HCT116 (cell line): ENCODE measurements at regions of chr2 and their contacts with region 1.

Region 1: GRCh38 chr2:241877989-241878970 is 8.8 kb downstream of the RTP5 start:
- DNase-seq: no peak
- ATAC-seq: peak; percentile 41
- H3K4me3 ChIP-seq: no peak overlapping the region
- H3K27ac ChIP-seq: no peak overlapping the region
- H3K4me1 ChIP-seq: peaks cover 10 to 23% of the 10 kb centered on the region in 2 experiments; a peak in 3 of 4 replicates
- H3K27me3 ChIP-seq: no peaks in the 10 kb centered on the region
- CTCF ChIP-seq: peak; percentile 56 to 72 (median 63); a peak in 5 of 6 replicates
- POLR2A ChIP-seq: no peak
- RAD21 ChIP-seq: peak; percentile 85

Region 2: GRCh38 chr2:240851078-240851991 is 1026.9 kb before region 1 on chr2:
- CTCF ChIA-PET with region 1: interaction called, 3 read pairs
- POLR2A ChIA-PET with region 1: no interaction called
- RAD21 ChIA-PET with region 1: no interaction called
- intact Hi-C with region 1: loop called (anchors 5 kb)
- DNase-seq: peak; percentile 58
- ATAC-seq: peak; percentile 98
- H3K4me3 ChIP-seq: no peak overlapping the region
- H3K27ac ChIP-seq: no peak overlapping the region
- H3K4me1 ChIP-seq: no peaks in the 10 kb centered on the region
- H3K27me3 ChIP-seq: no peaks in the 10 kb centered on the region
- CTCF ChIP-seq: peak; percentile 84 to 94 (median 92); a peak in 5 of 6 replicates
- POLR2A ChIP-seq: no peak
- RAD21 ChIP-seq: peak; percentile 97

Region 3: DNA sequence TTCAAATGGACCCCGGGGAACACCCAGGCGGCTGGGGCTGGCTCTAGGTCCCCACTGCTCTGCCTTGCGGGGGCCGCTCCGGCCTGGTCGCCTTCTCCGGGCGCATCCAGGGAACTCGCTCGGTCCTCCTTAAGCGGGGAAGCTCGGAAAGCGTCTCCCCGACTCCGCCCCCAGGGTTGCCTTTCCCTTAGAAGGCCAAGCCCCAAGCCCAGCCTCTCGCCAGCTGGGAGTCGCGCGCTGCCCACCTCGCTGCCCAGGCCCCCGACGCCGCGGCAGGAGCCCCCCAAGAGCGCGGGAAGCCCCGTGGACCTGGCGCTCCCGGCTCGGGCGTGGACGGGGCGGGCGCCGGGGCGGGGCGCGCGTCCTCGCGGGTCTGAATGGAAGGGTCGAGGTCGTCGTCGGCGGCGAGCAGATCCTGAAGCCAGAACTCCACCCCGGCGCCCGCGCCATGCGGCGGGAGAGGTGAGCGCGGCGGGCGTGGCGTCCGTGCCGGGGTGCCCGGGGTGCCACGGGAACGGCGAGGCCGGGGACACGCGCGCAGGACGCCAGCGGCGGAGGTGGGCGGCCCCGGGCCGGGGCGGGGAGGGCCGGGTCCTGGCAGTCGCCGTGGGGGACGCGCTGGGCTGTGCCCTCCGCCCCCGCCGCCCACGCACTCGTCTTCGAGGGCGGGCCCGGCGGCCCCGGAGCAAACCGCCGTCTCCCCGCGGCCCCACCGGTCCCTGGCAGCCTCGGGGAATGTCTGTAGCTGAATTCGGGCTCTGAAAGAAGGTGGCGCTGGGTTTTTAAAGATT is 319.6 kb before region 1 on chr2 and contains the start of gene BOK:
- CTCF ChIA-PET with region 1: no interaction called
- POLR2A ChIA-PET with region 1: no interaction called
- RAD21 ChIA-PET with region 1: no interaction called
- intact Hi-C with region 1: loop called (anchors 10 kb)
- DNase-seq: peak; percentile 72
- ATAC-seq: peak; percentile 77
- H3K4me3 ChIP-seq: peak within 1 kb of the TSS; percentile 67 to 79
- H3K27ac ChIP-seq: peak within 1 kb of the TSS; percentile 95
- H3K4me1 ChIP-seq: peaks cover 29 to 56% of the 10 kb centered on the region in 2 experiments; a peak in 3 of 4 replicates
- H3K27me3 ChIP-seq: no peaks in the 10 kb centered on the region
- CTCF ChIP-seq: no peak
- POLR2A ChIP-seq: peak; percentile 31
- RAD21 ChIP-seq: no peak
- total RNA-seq, gene BOK: 41.5 TPM

Region 4: DNA sequence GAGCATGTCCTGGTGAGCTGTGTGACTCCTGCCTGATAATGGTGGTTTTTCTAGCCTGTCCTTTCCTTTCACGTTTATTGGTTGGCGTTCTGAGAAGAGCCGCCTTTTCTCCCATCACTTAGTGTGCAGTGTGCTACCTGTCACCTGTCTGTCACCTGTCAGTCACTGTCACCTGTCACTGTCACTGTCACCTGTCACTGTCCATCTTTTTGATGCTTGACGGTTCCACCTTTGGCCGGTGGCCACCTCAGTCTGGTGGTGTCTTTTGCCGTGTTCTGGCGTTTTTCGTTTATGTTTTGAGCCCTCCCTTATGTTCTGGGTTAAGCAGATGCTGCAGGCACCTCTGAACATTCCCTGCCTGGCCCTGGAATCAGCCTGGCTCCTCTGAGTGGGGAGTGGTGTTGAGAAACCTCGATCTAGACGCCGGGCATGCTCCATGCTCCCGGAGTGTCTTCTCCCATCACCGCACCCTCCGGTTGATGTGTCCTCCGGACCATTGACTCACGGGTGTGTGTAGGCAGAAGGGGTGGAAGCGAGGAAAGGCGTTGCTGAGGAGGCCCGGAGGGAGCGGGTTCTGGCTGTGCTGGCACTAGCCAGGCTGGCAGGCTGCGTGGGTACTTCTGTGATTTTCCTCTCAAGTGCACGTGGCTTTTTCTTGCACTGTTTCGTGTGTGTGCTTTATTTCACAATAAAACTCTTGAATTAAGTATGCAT is 212.4 kb before region 1 on chr2:
- CTCF ChIA-PET with region 1: no interaction called
- POLR2A ChIA-PET with region 1: no interaction called
- RAD21 ChIA-PET with region 1: no interaction called
- intact Hi-C with region 1: loop called (anchors 1 kb)
- DNase-seq: no peak
- ATAC-seq: no peak
- H3K4me3 ChIP-seq: no peak overlapping the region
- H3K27ac ChIP-seq: no peak overlapping the region
- H3K4me1 ChIP-seq: peaks cover 0 to 5% of the 10 kb centered on the region in 2 experiments; a peak in 1 of 4 replicates
- H3K27me3 ChIP-seq: no peaks in the 10 kb centered on the region
- CTCF ChIP-seq: no peak
- POLR2A ChIP-seq: no peak
- RAD21 ChIP-seq: no peak

Region 5: GRCh38 chr2:241686649-241687425 is 191.4 kb before region 1 on chr2 and contains the start of gene DTYMK:
- CTCF ChIA-PET with region 1: no interaction called
- POLR2A ChIA-PET with region 1: no interaction called
- RAD21 ChIA-PET with region 1: no interaction called
- intact Hi-C with region 1: loop called (anchors 5 kb)
- DNase-seq: peak; percentile 84
- ATAC-seq: peak; percentile 95
- H3K4me3 ChIP-seq: peak within 1 kb of the TSS; percentile 84 to 86
- H3K27ac ChIP-seq: peak within 1 kb of the TSS; percentile 90
- H3K4me1 ChIP-seq: peaks cover 8 to 23% of the 10 kb centered on the region in 2 experiments
- H3K27me3 ChIP-seq: no peaks in the 10 kb centered on the region
- CTCF ChIP-seq: no peak
- POLR2A ChIP-seq: no peak
- RAD21 ChIP-seq: no peak
- total RNA-seq, gene DTYMK: 83.3 TPM